ENCODE measurements at regions of chr4 and their contacts with region 1.

Region 1: DNA sequence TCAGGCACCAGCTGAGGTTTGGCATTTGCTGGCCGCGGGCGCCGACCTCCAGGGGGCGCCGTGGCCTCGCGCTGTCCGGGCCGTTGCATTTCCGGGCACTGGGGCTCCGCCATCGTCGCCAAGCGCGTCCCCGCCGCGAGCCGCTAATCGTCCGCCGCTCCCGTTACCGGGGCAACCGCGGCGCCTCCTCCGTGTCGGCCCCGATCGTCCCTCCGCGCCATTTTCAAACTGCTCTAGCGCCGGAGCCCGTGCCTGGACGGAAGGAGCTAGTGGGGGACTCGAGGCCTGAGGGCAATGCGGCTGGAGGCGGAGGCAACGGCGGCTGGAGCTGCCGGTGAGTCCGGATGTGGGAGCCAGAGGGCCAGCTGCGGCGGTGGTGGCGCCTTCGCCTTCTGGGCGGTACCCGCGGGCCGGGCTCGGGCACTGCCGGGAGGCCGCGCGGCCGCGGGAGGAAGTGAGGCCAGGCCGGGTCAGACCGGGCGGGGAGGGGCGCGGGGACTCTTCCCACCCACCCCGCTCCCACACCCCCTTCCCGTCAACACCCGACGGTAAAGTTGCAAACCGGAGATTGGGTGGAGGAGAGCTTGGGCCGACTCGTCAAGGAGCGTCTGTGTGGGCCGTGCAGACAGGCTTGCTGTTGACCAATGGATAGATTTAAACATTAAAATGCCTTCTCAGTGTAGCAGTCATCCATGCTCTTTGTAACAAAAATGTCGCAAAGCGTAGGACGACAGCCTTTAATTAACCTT is at the start of gene CEP135:
- DNase-seq: peak; percentile 94
- H3K4me3 ChIP-seq: peak within 1 kb of the TSS; percentile 72 to 99 (median 72)
- H3K27ac ChIP-seq: peak within 1 kb of the TSS; percentile 100
- H3K4me1 ChIP-seq: peaks cover 31% of the 10 kb centered on the region
- H3K27me3 ChIP-seq: no peaks in the 10 kb centered on the region
- CTCF ChIP-seq: peak; percentile 96 to 98
- POLR2A ChIP-seq: peak; percentile 89
- total RNA-seq, gene CEP135: 14.7 and 15.3 TPM in 2 replicates

Region 2: GRCh38 chr4:55866973-55867574 is 81.8 kb before region 1 on chr4:
- CTCF ChIA-PET with region 1: interaction called, 18 read pairs
- POLR2A ChIA-PET with region 1: no interaction called
- dilution Hi-C with region 1: no loop called
- intact Hi-C with region 1: loop called (anchors 1 kb)
- DNase-seq: peak; percentile 78
- H3K4me3 ChIP-seq: no peak overlapping the region
- H3K27ac ChIP-seq: peak overlapping the region; percentile 55
- H3K4me1 ChIP-seq: peaks cover 21% of the 10 kb centered on the region
- H3K27me3 ChIP-seq: no peaks in the 10 kb centered on the region
- CTCF ChIP-seq: peak; percentile 65 to 68
- POLR2A ChIP-seq: no peak

Region 3: GRCh38 chr4:56048702-56049431 is 100.0 kb after region 1 on chr4:
- CTCF ChIA-PET with region 1: interaction called, 19 read pairs
- POLR2A ChIA-PET with region 1: no interaction called
- dilution Hi-C with region 1: no loop called
- intact Hi-C with region 1: loop called (anchors 1 kb)
- DNase-seq: peak; percentile 46
- H3K4me3 ChIP-seq: peak overlapping the region; percentile 61 to 87 (median 73)
- H3K27ac ChIP-seq: peak overlapping the region; percentile 26
- H3K4me1 ChIP-seq: peaks cover 6% of the 10 kb centered on the region
- H3K27me3 ChIP-seq: peaks cover 3 to 4% of the 10 kb centered on the region in 2 experiments
- CTCF ChIP-seq: peak; percentile 31 to 51
- POLR2A ChIP-seq: no peak

Region 4: DNA sequence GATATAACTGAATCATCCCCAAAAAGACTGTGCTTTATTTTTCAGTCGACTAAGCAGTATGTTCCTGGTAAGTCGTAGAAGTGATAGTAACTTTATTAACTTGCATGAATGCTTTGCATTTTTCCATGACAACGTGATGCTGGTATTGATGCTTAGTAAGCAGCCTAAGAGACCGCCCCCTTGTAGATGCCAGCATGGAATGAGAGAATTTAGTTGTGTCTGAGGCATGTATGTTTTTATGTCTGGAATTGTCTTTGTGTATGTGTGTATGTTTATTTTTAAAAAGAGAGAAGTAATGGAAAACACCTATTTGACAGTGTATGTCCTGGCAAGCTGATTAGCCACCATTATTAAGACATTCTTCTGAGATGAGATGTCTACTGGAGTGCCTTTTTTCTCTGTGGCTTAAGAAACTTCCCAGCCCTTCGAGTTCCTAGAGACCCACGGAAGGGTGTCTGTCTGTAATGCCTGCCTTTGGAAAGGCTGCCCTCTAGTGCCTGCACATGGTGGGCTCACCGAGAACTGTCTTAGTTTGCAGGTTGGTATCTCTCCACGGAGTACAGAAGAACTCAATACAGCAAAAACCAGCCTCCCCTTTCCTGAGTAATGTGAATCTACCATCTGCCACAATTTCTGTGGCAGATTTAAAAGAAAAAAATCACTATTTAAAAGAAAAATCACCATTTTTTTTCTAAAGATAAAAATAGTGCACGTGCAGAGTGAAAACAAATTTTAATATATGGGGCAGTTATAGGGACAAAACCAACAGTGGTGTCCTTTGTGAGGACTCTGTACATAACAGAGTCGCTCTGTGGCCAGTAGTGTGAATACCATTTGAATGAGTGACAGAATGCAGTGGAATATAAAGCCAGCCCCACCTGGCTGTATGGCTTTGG is 352.5 kb after region 1 on chr4:
- CTCF ChIA-PET with region 1: interaction called, 57 read pairs
- POLR2A ChIA-PET with region 1: no interaction called
- dilution Hi-C with region 1: no loop called
- intact Hi-C with region 1: loop called (anchors 1 kb)
- DNase-seq: peak; percentile 84
- H3K4me3 ChIP-seq: peak overlapping the region in 1 of 3 experiments; percentile 23
- H3K27ac ChIP-seq: peak overlapping the region; percentile 35
- H3K4me1 ChIP-seq: no peaks in the 10 kb centered on the region
- H3K27me3 ChIP-seq: no peaks in the 10 kb centered on the region
- CTCF ChIP-seq: peak; percentile 90
- POLR2A ChIP-seq: no peak

Region 5: GRCh38 chr4:56410235-56411062 is 461.5 kb after region 1 on chr4:
- CTCF ChIA-PET with region 1: interaction called, 5 read pairs
- POLR2A ChIA-PET with region 1: interaction called, 4 read pairs
- dilution Hi-C with region 1: no loop called
- intact Hi-C with region 1: loop called (anchors 1 kb)
- DNase-seq: peak; percentile 99
- H3K4me3 ChIP-seq: peak overlapping the region; percentile 20 to 76 (median 26)
- H3K27ac ChIP-seq: peak overlapping the region; percentile 97
- H3K4me1 ChIP-seq: peaks cover 29% of the 10 kb centered on the region
- H3K27me3 ChIP-seq: no peaks in the 10 kb centered on the region
- CTCF ChIP-seq: no peak
- POLR2A ChIP-seq: no peak

Region 6: DNA sequence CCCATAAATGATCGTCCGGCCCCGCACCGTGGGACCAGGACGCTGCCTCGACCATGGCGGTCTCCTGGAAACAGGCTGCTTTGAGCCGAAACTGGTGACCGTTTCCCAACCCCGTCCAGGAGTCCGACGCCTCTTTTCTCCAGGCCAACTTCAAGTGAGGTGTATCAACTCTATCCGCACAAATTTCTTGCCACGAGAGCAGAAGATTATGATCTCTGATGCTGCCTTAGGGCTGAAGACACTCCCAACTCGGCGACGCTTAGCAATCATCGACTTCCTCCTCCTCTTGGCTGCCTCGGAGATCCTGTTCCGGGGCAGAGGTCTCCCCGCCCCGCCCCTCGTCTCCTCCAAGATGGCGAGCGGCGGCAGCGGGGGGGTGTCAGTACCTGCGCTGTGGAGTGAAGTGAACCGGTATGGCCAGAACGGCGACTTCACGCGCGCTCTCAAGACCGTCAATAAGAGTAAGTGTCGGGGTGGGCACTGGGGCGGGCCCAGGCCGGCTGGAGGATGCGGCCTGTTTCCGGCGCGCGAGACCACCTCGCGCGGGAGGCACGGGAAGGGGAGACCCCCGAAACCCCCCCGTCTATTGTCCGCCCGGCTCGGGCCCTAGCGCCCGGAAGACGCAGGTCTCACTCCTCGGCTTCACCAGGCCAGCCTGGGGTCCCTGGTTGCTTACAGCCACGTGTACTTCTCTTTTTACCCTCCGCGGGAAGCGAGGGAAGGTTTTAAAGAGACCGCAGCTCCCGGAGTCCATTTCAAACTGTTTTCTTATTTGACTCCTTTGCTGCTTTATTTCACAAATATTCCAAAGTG is 518.6 kb after region 1 on chr4 and contains the start of gene SRP72:
- CTCF ChIA-PET with region 1: interaction called, 6 read pairs
- POLR2A ChIA-PET with region 1: no interaction called
- dilution Hi-C with region 1: no loop called
- intact Hi-C with region 1: loop called (anchors 1 kb)
- DNase-seq: peak; percentile 91
- H3K4me3 ChIP-seq: peak within 1 kb of the TSS; percentile 67 to 99 (median 98)
- H3K27ac ChIP-seq: peak within 1 kb of the TSS; percentile 94
- H3K4me1 ChIP-seq: peaks cover 27% of the 10 kb centered on the region
- H3K27me3 ChIP-seq: no peaks in the 10 kb centered on the region
- CTCF ChIP-seq: no peak
- POLR2A ChIP-seq: peak; percentile 90
- total RNA-seq, gene SRP72: 132 and 145 TPM in 2 replicates

Region 7: GRCh38 chr4:57249083-57249482 is 1300.2 kb after region 1 on chr4:
- CTCF ChIA-PET with region 1: no interaction called
- POLR2A ChIA-PET with region 1: no interaction called
- dilution Hi-C with region 1: no loop called
- intact Hi-C with region 1: no loop called
- DNase-seq: no peak
- H3K4me3 ChIP-seq: no peak overlapping the region
- H3K27ac ChIP-seq: no peak overlapping the region
- H3K4me1 ChIP-seq: peaks cover 3% of the 10 kb centered on the region
- H3K27me3 ChIP-seq: no peaks in the 10 kb centered on the region
- CTCF ChIP-seq: no peak
- POLR2A ChIP-seq: no peak

Measured in endothelial cell of umbilical vein (primary cell).